ENCODE measurements at regions of chr1 and their contacts with region 1.

Region 1: GRCh38 chr1:201481761-201482493 is 12.9 kb upstream of the PHLDA3 start:
- DNase-seq: peak; percentile 88 to 91 (median 90)
- ATAC-seq: peak; percentile 79
- H3K4me3 ChIP-seq: no peak overlapping the region
- H3K27ac ChIP-seq: peak overlapping the region in 1 of 4 donors; percentile 5
- H3K4me1 ChIP-seq: peaks cover 28% of the 10 kb centered on the region
- H3K27me3 ChIP-seq: no peaks in the 10 kb centered on the region
- CTCF ChIP-seq: peak; percentile 81 to 97 (median 94)
- POLR2A ChIP-seq: no peak

Region 2: DNA sequence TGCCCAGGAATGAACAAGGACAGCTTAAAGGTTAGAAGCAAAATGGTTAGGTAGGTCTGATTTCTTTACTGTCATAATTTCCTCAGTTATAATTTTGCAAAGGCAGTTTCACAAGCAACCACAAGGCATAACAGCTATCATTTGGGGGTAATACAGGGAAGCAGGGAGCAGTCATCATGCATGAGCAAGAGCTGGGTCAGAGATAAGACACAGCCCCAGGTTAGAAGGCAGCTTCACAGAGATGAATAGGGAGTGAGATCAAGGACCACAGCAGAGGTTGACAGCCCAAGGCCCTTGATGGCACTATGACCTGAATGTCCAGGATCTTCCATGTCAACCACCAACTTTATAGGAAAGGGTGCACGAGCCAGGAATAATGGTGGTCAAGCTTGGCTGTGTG is 34.0 kb after region 1 on chr1:
- intact Hi-C with region 1: loop called (anchors 5 kb)
- DNase-seq: no peak
- ATAC-seq: no peak
- H3K4me3 ChIP-seq: no peak overlapping the region
- H3K27ac ChIP-seq: peak overlapping the region in 2 of 4 donors; percentile 10 to 25
- H3K4me1 ChIP-seq: peaks cover 45% of the 10 kb centered on the region
- H3K27me3 ChIP-seq: no peaks in the 10 kb centered on the region
- CTCF ChIP-seq: no peak
- POLR2A ChIP-seq: no peak

Measured in body of pancreas (tissue), 4 donors.